ENCODE measurements at regions of chr10 and their contacts with region 1.

Region 1: GRCh38 chr10:29119374-29119773 is 169.5 kb upstream of the LYZL1 start:
- DNase-seq: peak; percentile 37
- H3K4me3 Mint-ChIP-seq: no peak overlapping the region
- H3K27ac Mint-ChIP-seq: peak overlapping the region; percentile 75
- H3K4me1 Mint-ChIP-seq: peaks cover 8% of the 10 kb centered on the region
- H3K27me3 Mint-ChIP-seq: no peaks in the 10 kb centered on the region
- CTCF ChIP-seq: peak; percentile 21

Region 2: GRCh38 chr10:29063806-29064644 is 55.3 kb before region 1 on chr10:
- CTCF ChIA-PET with region 1: no interaction called
- POLR2A ChIA-PET with region 1: no interaction called
- intact Hi-C with region 1: loop called (anchors 10 kb)
- DNase-seq: peak; percentile 61
- H3K4me3 Mint-ChIP-seq: peak overlapping the region; percentile 53
- H3K27ac Mint-ChIP-seq: peak overlapping the region; percentile 44
- H3K4me1 Mint-ChIP-seq: peaks cover 29% of the 10 kb centered on the region
- H3K27me3 Mint-ChIP-seq: no peaks in the 10 kb centered on the region
- CTCF ChIP-seq: no peak

Region 3: DNA sequence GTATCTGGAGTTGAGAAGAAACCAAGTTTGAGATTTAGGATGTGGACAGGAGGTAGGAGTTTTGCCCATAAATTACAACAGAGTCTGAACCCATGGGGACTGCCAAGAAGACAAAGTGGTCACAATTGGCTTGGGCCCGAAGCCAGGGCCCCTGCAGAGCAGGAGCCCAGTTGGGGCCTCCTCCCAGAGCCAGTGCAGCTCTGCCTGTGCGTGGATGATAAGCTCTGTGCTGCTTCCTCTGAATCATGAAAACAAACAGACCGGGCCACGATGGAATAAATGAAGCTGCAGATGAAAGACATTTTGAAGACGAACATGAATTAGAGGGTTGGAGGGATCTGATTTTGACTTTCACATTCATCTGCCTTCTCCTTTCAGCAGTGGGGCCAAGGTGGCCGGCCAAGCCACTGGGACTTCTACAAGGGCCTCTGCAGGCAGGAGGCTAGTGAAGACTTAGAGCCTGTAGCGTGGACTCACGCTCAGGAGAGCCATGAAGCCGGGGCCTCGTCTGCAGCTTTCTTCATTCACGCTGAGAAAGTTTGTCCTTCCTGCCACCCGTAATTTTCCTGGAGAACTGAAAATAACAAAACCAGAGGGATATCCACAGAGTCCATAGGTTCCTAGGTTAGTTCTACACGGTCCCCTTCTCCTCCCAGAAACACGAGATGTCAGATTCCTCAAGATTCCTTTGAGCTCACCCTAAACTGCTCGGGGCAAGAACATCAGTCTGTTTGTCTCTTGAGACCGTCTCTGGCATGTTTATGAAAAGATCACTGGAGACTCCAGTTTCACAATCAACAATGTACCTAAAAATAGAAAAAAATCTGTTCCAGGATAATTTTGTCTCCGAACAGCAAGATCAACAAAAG is 12.8 kb after region 1 on chr10:
- CTCF ChIA-PET with region 1: interaction called, 11 read pairs
- POLR2A ChIA-PET with region 1: no interaction called
- intact Hi-C with region 1: no loop called
- DNase-seq: peak; percentile 44
- H3K4me3 Mint-ChIP-seq: no peak overlapping the region
- H3K27ac Mint-ChIP-seq: no peak overlapping the region
- H3K4me1 Mint-ChIP-seq: peaks cover 8% of the 10 kb centered on the region
- H3K27me3 Mint-ChIP-seq: peaks cover 5% of the 10 kb centered on the region
- CTCF ChIP-seq: no peak

Region 4: DNA sequence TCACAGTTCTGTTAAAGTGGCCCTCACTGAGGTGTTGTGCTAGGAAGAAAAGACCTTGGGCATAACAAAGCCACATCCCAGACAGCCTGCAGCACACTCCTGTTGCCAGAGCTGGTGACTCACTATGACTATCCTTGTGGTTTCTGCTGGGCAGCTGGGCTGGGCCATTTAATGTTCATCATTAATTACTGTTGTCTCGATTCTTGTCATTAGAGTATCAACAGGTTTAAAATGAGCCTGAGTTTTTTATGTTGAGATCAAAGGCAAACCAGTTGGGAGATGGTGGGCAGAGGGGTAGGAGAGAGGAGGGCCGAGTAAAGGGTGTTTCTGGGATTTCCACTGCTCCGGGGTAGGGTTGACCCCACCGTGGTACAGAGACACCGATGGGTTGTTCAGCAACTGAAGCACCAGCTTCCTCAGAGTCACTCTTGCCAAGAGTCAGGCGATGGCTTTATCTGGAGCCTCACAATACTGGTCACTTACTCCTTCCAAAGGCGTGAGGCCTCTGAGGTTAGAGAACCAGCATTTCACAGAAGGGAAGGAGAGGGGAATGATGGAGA is 40.8 kb after region 1 on chr10:
- CTCF ChIA-PET with region 1: no interaction called
- POLR2A ChIA-PET with region 1: no interaction called
- intact Hi-C with region 1: no loop called
- DNase-seq: peak; percentile 87
- H3K4me3 Mint-ChIP-seq: peak overlapping the region; percentile 39
- H3K27ac Mint-ChIP-seq: peak overlapping the region; percentile 71
- H3K4me1 Mint-ChIP-seq: peaks cover 31% of the 10 kb centered on the region
- H3K27me3 Mint-ChIP-seq: no peaks in the 10 kb centered on the region
- CTCF ChIP-seq: no peak